ENCODE measurements at regions of chr20 and their contacts with region 1.

Region 1: GRCh38 chr20:9978397-9979004 is 56.3 kb upstream of the ANKEF1 start:
- DNase-seq: peak; percentile 89
- H3K4me3 ChIP-seq: no peak overlapping the region
- CTCF ChIP-seq: peak; percentile 75

Region 2: GRCh38 chr20:9867196-9867980 is 111.1 kb before region 1 on chr20:
- in situ Hi-C with region 1: no loop called
- DNase-seq: no peak
- H3K4me3 ChIP-seq: no peak overlapping the region
- CTCF ChIP-seq: no peak

Region 3: GRCh38 chr20:10090588-10091166 is 112.2 kb after region 1 on chr20:
- in situ Hi-C with region 1: loop called (anchors 25 kb)
- DNase-seq: peak; percentile 68
- H3K4me3 ChIP-seq: no peak overlapping the region
- CTCF ChIP-seq: peak; percentile 88